ENCODE measurements at regions of chr6 and their contacts with region 1.

Region 1: DNA sequence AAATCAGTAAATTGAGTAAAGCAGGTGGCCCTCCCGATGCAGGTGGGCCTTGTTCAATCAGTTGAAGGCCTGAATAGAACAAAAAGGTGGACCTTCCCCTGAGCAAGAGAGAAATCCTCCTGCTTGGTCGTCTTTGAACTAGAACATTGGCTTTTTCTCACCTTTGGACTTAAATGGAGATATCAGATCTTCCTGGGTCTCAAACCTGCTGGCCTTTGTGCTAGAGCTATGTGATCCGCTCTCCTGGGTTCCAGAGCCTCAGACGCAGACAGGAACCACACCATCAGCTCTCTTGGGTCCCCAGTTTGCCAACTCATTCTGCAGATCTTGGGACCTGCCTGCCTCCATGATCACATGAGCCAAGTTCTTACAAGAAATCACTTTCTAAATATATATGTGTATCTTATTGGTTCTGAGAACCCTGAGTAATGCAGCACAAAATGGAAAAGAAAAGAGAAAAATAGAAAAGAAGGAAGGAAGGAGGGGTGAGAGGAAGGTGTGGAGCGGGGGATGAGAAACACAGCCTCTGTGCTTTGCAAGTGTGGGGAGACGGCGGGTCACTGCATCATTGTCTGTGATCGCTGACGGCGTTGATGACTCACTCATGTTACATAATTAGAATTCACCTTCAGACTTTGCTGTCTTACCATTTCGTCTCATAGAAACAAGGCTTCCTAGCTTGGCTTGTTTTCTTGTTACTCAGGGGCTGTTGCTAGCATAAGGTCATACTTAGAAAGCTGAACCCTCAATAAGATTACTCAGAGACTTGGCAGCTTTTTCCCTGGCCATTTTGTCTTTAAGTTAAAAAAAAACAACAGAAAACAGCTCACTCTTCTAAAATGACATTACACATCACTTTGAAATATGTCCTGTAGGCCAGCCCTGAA is 85.7 kb upstream of the NEDD9 start:
- DNase-seq: peak; percentile 97 to 100 (median 99)
- H3K4me3 ChIP-seq: no peak overlapping the region
- H3K4me3 Mint-ChIP-seq: peak overlapping the region in 1 of 2 donors; percentile 1
- H3K27ac ChIP-seq: peak overlapping the region; percentile 70 to 88
- H3K27ac Mint-ChIP-seq: peak overlapping the region; percentile 91 to 99 (median 98)
- H3K4me1 ChIP-seq: peaks cover 28 to 31% of the 10 kb centered on the region in 2 donors
- H3K4me1 Mint-ChIP-seq: peaks cover 53% of the 10 kb centered on the region
- H3K27me3 ChIP-seq: no peaks in the 10 kb centered on the region
- H3K27me3 Mint-ChIP-seq: peaks cover 0 to 3% (median 2%) of the 10 kb centered on the region in 3 donors
- CTCF ChIP-seq: no peak

Region 2: GRCh38 chr6:11232193-11232769 is 85.8 kb before region 1 on chr6 and contains the start of gene NEDD9:
- intact Hi-C with region 1: loop called in 1 of 2 experiments (anchors 5 kb)
- DNase-seq: peak; percentile 89 to 96 (median 92)
- H3K4me3 ChIP-seq: peak within 1 kb of the TSS; percentile 52 to 98 (median 88)
- H3K4me3 Mint-ChIP-seq: peak within 1 kb of the TSS; percentile 94 to 99
- H3K27ac ChIP-seq: peak within 1 kb of the TSS; percentile 45 to 80
- H3K27ac Mint-ChIP-seq: peak within 1 kb of the TSS; percentile 96 to 100 (median 97)
- H3K4me1 ChIP-seq: peaks cover 27 to 40% of the 10 kb centered on the region in 2 donors
- H3K4me1 Mint-ChIP-seq: peaks cover 50% of the 10 kb centered on the region
- H3K27me3 ChIP-seq: peaks cover 0 to 3% of the 10 kb centered on the region in 2 donors
- H3K27me3 Mint-ChIP-seq: peaks cover 0 to 6% (median 4%) of the 10 kb centered on the region in 3 donors
- CTCF ChIP-seq: no peak
- polyA plus RNA-seq, gene NEDD9: 18.2 to 35.9 (median 33.0) TPM

Region 3: GRCh38 chr6:11353921-11354389 is 35.8 kb after region 1 on chr6:
- intact Hi-C with region 1: loop called (anchors 1 to 5 kb)
- DNase-seq: peak; percentile 38 to 79 (median 62)
- H3K4me3 ChIP-seq: no peak overlapping the region
- H3K4me3 Mint-ChIP-seq: no peak overlapping the region
- H3K27ac ChIP-seq: peak overlapping the region; percentile 4 to 11
- H3K27ac Mint-ChIP-seq: peak overlapping the region; percentile 71 to 92 (median 88)
- H3K4me1 ChIP-seq: peaks cover 70 to 93% of the 10 kb centered on the region in 2 donors
- H3K4me1 Mint-ChIP-seq: peaks cover 89% of the 10 kb centered on the region
- H3K27me3 ChIP-seq: no peaks in the 10 kb centered on the region
- H3K27me3 Mint-ChIP-seq: peaks cover 0 to 1% (median 0%) of the 10 kb centered on the region in 3 donors
- CTCF ChIP-seq: no peak

Region 4: GRCh38 chr6:11366183-11366933 is 48.2 kb after region 1 on chr6:
- intact Hi-C with region 1: loop called in 1 of 2 experiments (anchors 5 kb)
- DNase-seq: peak; percentile 86 to 96 (median 92)
- H3K4me3 ChIP-seq: peak overlapping the region in 1 of 3 experiments; percentile 7
- H3K4me3 Mint-ChIP-seq: peak overlapping the region; percentile 26 to 39
- H3K27ac ChIP-seq: peak overlapping the region; percentile 1 to 72
- H3K27ac Mint-ChIP-seq: peak overlapping the region; percentile 88 to 92 (median 92)
- H3K4me1 ChIP-seq: peaks cover 56 to 57% of the 10 kb centered on the region in 2 donors
- H3K4me1 Mint-ChIP-seq: peaks cover 71% of the 10 kb centered on the region
- H3K27me3 ChIP-seq: no peaks in the 10 kb centered on the region
- H3K27me3 Mint-ChIP-seq: peaks cover 0 to 7% (median 2%) of the 10 kb centered on the region in 3 donors
- CTCF ChIP-seq: no peak

Region 5: DNA sequence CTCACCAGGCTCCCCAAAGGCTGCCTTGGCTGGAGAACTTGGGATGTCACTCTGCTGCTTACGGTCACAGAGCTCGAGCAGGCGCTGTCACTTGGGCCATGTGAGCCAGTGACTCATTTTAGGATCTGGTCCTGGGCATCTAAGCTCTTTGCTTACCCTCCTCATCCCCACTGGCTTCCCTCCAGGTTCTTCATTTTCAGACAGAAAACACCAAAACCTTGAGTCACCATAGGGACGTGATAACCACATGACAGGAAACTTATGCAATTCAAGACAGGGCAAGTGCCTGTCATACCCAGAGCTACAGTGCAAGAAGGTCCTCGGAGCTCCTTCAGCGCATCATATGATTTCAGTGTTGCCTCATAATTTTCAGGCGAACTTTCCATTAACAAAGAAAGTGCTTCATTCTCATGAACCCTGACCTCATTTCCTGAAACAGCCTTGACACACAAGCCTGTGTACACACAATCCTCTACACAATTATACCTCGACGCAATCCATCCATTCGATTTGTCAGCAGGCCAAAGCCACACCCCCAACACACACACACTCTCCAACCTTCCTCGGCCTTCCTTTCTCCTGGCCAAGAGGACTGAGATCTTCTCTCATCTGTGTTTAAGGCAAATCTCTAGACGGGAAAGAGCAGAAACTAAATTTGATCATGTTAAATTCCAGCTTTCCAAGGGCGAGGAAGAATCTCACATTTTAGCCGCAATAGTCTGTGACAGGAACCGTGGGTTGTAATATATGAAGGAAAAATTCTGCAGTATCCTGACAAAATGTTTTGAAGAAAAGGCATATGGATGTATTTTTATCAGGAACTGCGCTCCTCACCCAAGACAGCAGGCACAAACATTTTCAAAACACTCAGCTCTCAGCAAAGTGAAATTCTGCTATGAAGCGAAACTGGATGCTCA is 1984.9 kb after region 1 on chr6:
- intact Hi-C with region 1: loop called in 1 of 2 experiments (anchors 10 kb)
- DNase-seq: peak; percentile 99 to 100 (median 100)
- H3K4me3 ChIP-seq: peak overlapping the region in 1 of 3 experiments; percentile 31
- H3K4me3 Mint-ChIP-seq: peak overlapping the region; percentile 34 to 75
- H3K27ac ChIP-seq: peak overlapping the region; percentile 96 to 97
- H3K27ac Mint-ChIP-seq: peak overlapping the region; percentile 97 to 100 (median 100)
- H3K4me1 ChIP-seq: peaks cover 34 to 36% of the 10 kb centered on the region in 2 donors
- H3K4me1 Mint-ChIP-seq: peaks cover 42% of the 10 kb centered on the region
- H3K27me3 ChIP-seq: no peaks in the 10 kb centered on the region
- H3K27me3 Mint-ChIP-seq: peaks cover 0 to 6% (median 0%) of the 10 kb centered on the region in 3 donors
- CTCF ChIP-seq: no peak